ENCODE measurements at regions of chr16 and their contacts with region 1.

Region 1: GRCh38 chr16:86199871-86200695 is 301.1 kb downstream of the IRF8 start:
- DNase-seq: peak; percentile 96
- H3K4me3 ChIP-seq: peak overlapping the region; percentile 12 to 43 (median 32)
- H3K27ac ChIP-seq: peak overlapping the region; percentile 87 to 96 (median 92)
- H3K4me1 ChIP-seq: peaks cover 0 to 54% (median 47%) of the 10 kb centered on the region in 4 donors
- H3K27me3 ChIP-seq: no peaks in the 10 kb centered on the region
- CTCF ChIP-seq: no peak
- EP300 ChIP-seq: peak; percentile 95 to 99 (median 98)
- POLR2A ChIP-seq: no peak

Region 2: GRCh38 chr16:86078121-86078600 is 121.9 kb before region 1 on chr16:
- intact Hi-C with region 1: loop called (anchors 1 kb)
- DNase-seq: peak; percentile 95
- H3K4me3 ChIP-seq: no peak overlapping the region
- H3K27ac ChIP-seq: peak overlapping the region in 3 of 4 donors; percentile 81 to 89 (median 86)
- H3K4me1 ChIP-seq: peaks cover 0 to 24% (median 15%) of the 10 kb centered on the region in 4 donors
- H3K27me3 ChIP-seq: no peaks in the 10 kb centered on the region
- CTCF ChIP-seq: no peak
- EP300 ChIP-seq: peak; percentile 92 to 97 (median 95)
- POLR2A ChIP-seq: no peak

Region 3: GRCh38 chr16:86157616-86158247 is 42.4 kb before region 1 on chr16:
- intact Hi-C with region 1: loop called (anchors 2 kb)
- DNase-seq: no peak
- H3K4me3 ChIP-seq: no peak overlapping the region
- H3K27ac ChIP-seq: peak overlapping the region in 3 of 4 donors; percentile 87 to 90 (median 89)
- H3K4me1 ChIP-seq: peaks cover 0 to 60% (median 27%) of the 10 kb centered on the region in 4 donors
- H3K27me3 ChIP-seq: no peaks in the 10 kb centered on the region
- CTCF ChIP-seq: no peak
- EP300 ChIP-seq: no peak
- POLR2A ChIP-seq: no peak

Region 4: GRCh38 chr16:86214326-86215232 is 14.5 kb after region 1 on chr16:
- intact Hi-C with region 1: no loop called
- DNase-seq: peak; percentile 60
- H3K4me3 ChIP-seq: no peak overlapping the region
- H3K27ac ChIP-seq: peak overlapping the region in 1 of 4 donors; percentile 50
- H3K4me1 ChIP-seq: peaks cover 0 to 9% (median 8%) of the 10 kb centered on the region in 4 donors
- H3K27me3 ChIP-seq: no peaks in the 10 kb centered on the region
- CTCF ChIP-seq: no peak
- EP300 ChIP-seq: no peak
- POLR2A ChIP-seq: no peak

Region 5: DNA sequence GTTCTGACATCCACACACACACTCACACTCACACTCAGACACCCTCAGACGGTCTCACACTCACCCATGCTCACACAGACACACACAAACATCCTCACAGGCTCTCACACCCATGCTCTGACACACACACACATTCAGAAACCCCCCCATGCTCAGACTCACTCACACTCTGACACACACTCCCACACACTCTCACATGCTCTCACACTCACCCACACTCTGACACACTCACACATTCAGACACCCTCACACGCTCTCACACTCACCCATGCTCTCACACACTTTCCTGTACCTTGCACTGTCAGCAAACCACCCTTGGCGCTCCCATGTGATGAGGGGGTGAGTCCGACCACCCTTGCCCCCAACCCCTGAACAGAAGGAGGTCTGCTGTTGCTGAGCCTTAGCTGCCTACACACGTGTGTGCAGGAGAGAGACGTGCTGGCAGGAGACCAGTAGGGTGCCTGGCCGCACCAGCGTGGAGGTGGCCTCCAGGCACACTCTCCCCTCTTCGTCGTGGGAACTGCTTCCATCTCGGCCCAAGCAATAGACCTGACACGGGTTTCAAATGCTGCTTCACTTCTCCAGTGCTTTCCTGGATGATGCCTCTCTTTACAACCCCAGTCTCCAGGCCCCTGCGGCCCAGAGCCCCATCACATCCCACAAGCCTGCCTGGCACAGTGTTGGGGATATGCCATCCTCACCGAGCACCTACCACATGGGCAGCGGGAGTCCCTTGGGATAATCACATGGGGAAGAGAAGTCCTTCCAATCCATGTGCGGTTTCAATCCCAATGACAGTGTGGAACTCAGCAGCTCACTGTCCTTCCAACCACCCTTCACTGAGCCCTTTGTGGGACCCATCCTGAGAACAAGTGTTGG is 42.4 kb after region 1 on chr16:
- intact Hi-C with region 1: no loop called
- DNase-seq: peak; percentile 54
- H3K4me3 ChIP-seq: no peak overlapping the region
- H3K27ac ChIP-seq: no peak overlapping the region
- H3K4me1 ChIP-seq: peaks cover 0 to 19% (median 13%) of the 10 kb centered on the region in 4 donors
- H3K27me3 ChIP-seq: no peaks in the 10 kb centered on the region
- CTCF ChIP-seq: no peak
- EP300 ChIP-seq: no peak
- POLR2A ChIP-seq: no peak

Region 6: GRCh38 chr16:86300746-86301481 is 100.8 kb after region 1 on chr16:
- intact Hi-C with region 1: loop called (anchors 1 kb)
- DNase-seq: peak; percentile 72
- H3K4me3 ChIP-seq: peak overlapping the region in 3 of 4 donors; percentile 19 to 38 (median 34)
- H3K27ac ChIP-seq: peak overlapping the region in 3 of 4 donors; percentile 93 to 96 (median 94)
- H3K4me1 ChIP-seq: peaks cover 0 to 89% (median 80%) of the 10 kb centered on the region in 4 donors
- H3K27me3 ChIP-seq: no peaks in the 10 kb centered on the region
- CTCF ChIP-seq: no peak
- EP300 ChIP-seq: no peak
- POLR2A ChIP-seq: no peak

Region 7: DNA sequence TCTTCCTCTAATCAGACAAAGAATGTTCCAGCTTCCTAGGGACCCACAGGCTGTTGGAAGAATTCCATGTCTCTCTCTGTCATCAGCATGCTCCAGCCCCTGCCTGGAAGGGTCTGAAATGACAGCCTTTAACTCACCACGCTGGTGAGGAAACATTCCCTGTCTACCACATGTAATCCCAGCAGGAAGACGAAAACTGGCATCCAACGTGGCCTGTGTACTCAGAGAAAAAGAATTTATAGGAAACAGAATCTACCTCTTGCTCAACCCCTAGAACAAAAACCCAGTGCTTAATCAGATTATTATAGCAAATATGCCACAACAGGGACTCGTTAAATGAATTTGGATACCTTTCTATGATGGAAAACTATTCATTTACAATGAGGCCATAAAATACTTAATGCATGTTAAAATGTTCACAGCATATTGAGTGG is 163.0 kb after region 1 on chr16:
- intact Hi-C with region 1: loop called (anchors 1 kb)
- DNase-seq: peak; percentile 88
- H3K4me3 ChIP-seq: no peak overlapping the region
- H3K27ac ChIP-seq: peak overlapping the region; percentile 83 to 89 (median 85)
- H3K4me1 ChIP-seq: peaks cover 0 to 56% (median 46%) of the 10 kb centered on the region in 4 donors
- H3K27me3 ChIP-seq: no peaks in the 10 kb centered on the region
- CTCF ChIP-seq: no peak
- EP300 ChIP-seq: peak in 3 of 4 donors; percentile 25 to 84 (median 52)
- POLR2A ChIP-seq: no peak

Region 8: DNA sequence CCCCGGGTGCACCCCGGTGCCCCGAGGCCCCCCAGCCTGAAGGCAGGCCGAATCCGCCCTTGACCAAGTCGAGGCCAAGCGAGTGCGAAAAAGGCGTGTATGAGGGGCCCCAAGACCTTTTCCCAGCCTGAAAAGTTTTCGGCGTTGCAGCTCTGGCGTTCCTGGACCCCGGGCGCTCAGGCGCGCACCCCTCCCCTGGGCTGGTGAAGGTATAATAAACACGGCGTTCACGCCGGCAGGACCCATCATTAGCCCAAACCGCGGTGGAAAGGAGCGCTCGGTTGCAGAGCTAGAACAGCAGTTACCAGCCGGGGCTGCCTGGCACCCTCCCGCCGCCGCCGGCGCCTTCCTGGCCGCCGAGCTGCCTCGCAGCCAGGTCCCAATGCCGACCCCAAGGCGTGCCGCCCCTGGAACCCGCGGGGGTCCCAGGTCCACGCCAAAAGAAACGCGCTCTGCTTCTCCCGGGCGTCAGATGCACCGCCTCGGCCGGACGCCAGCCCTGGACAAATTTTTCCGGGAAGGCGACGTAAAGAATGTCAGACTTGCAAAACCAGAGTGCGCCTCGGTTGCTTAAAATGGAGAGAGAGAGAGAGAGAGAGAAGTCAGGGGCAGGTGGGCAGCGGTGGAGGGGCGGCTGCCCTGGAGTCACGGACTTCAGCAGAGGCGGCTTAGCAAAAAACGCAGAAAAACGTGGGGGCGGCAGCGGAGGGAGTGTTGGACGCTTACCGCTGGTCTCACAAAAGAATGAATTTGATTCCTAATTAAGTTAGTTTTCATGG is 298.8 kb after region 1 on chr16:
- intact Hi-C with region 1: loop called (anchors 2 kb)
- DNase-seq: peak; percentile 88
- H3K4me3 ChIP-seq: peak overlapping the region; percentile 65 to 84 (median 68)
- H3K27ac ChIP-seq: peak overlapping the region; percentile 99 to 100 (median 99)
- H3K4me1 ChIP-seq: peaks cover 0 to 81% (median 59%) of the 10 kb centered on the region in 4 donors
- H3K27me3 ChIP-seq: peaks cover 0 to 31% (median 0%) of the 10 kb centered on the region in 3 donors
- CTCF ChIP-seq: no peak
- EP300 ChIP-seq: no peak
- POLR2A ChIP-seq: peak; percentile 8 to 9

Region 9: DNA sequence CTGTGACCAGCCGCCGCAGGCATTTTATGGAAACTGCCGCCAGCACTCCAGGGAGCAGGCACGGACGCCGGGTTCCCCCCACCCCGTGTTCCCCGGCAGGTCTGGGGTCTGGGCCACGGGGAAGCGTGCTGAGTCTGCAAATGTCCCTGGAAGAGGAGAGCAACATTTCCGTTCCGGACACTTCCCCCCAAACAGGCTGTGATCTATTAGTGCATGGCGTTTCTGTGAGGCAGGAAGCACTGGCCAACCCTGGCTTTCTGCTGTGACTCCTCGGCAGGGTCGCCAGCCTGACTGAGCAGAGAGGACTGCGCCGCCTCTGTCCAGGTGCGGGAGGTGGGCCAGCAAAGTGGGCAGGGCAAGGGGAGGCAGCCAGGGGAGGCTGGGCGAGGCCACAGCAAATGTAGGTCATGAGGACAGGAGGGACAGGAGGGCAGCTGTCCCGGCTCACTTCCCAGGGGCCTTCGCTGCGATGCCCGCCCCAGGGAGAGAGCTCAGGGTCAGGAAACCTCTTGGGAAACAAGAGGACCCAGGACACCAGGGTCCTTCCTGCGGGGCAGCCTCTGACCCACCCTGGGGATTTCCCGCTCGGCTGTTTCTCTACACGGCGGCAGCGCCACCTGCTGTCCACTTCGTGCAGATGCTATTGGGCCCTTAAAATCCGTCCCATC is 319.7 kb after region 1 on chr16:
- intact Hi-C with region 1: loop called (anchors 2 kb)
- DNase-seq: peak; percentile 89
- H3K4me3 ChIP-seq: peak overlapping the region; percentile 1 to 37 (median 22)
- H3K27ac ChIP-seq: peak overlapping the region in 3 of 4 donors; percentile 99 to 100 (median 99)
- H3K4me1 ChIP-seq: peaks cover 0 to 45% (median 38%) of the 10 kb centered on the region in 4 donors
- H3K27me3 ChIP-seq: peaks cover 3 to 7% (median 3%) of the 10 kb centered on the region in 3 donors
- CTCF ChIP-seq: peak; percentile 89 to 93 (median 90)
- EP300 ChIP-seq: no peak
- POLR2A ChIP-seq: no peak